ENCODE measurements at regions of chr13 and their contacts with region 1.

Region 1: DNA sequence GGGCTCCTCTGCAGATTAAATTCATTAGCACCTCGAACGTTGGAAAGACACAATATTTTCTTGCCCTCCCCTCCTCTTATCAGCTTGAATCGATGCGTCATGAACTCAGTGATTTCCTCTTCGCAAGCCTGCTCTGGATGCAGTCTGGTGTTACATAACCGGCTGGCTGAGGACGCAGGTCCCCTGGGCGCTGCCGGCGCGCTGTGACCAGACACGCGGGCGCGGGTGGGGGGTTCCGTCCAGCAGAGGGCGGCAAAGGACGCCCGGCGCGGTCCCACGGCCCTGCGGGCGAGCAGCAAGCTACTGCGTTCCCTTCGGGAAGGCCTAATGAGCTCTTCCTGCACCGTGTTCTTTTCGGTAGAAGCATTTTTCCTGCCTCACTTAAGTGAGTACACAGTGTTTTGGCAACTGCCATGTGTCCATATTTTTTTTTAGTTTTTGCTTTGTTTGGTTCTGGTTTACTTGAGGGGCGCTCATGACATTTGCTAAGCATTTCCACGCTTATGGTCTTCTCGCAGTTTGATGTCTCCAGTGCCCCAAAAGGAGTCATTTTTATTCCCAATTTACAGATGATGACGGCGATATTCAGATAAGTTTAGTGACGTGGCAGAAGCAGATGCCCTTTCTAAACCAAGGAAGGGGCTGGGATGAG is 112.2 kb upstream of the MBNL2 start:
- DNase-seq: peak; percentile 80 to 83 (median 80)
- ATAC-seq: peak; percentile 99
- H3K4me3 ChIP-seq: no peak overlapping the region
- H3K27ac ChIP-seq: no peak overlapping the region
- H3K4me1 ChIP-seq: peaks cover 4 to 9% of the 10 kb centered on the region in 2 experiments; a peak in 3 of 5 replicates
- H3K27me3 ChIP-seq: 0 out of 5 replicates have a peak, but pooled peaks cover 0 to 6% of the 10 kb centered on the region in 2 experiments
- CTCF ChIP-seq: peak; percentile 84 to 91 (median 85)
- EP300 ChIP-seq: no peak
- POLR2A ChIP-seq: no peak
- RAD21 ChIP-seq: peak; percentile 95 to 98

Region 2: GRCh38 chr13:95955255-95955654 is 1154.7 kb before region 1 on chr13:
- CTCF ChIA-PET with region 1: no interaction called
- POLR2A ChIA-PET with region 1: no interaction called
- in situ Hi-C with region 1: no loop called
- intact Hi-C with region 1: no loop called
- DNase-seq: no peak
- ATAC-seq: no peak
- H3K4me3 ChIP-seq: no peak overlapping the region
- H3K27ac ChIP-seq: no peak overlapping the region
- H3K4me1 ChIP-seq: peaks cover 0 to 4% of the 10 kb centered on the region in 2 experiments; a peak in 2 of 5 replicates
- H3K27me3 ChIP-seq: no peaks in the 10 kb centered on the region
- CTCF ChIP-seq: no peak
- EP300 ChIP-seq: no peak
- POLR2A ChIP-seq: no peak
- RAD21 ChIP-seq: no peak

Region 3: DNA sequence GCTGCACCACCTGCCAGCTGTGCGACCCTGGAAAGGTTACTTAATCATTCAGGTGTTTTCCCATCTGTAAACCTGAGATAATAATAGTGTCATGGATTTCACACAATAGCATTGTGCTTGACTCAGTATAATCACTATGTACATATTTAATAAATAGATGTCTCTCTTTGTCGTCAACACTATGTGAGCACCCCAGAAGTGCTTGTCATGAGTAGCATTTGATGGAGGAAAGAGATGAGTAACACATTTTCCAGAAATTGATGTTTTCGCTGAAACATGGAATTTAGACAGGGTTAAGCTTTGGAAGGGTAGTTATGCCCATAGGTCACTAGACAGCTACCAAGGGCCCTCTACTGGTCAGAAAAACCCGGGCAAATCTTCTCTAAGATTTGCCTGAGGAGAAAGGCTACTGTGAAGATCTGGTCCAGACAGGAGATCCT is 102.7 kb after region 1 on chr13:
- CTCF ChIA-PET with region 1: interaction called, 5 read pairs
- POLR2A ChIA-PET with region 1: no interaction called
- in situ Hi-C with region 1: loop called (anchors 5 kb)
- intact Hi-C with region 1: loop called (anchors 1 kb)
- DNase-seq: peak in 2 of 4 experiments; percentile 40 to 47
- ATAC-seq: peak; percentile 95
- H3K4me3 ChIP-seq: no peak overlapping the region
- H3K27ac ChIP-seq: no peak overlapping the region
- H3K4me1 ChIP-seq: no peaks in the 10 kb centered on the region; a peak in 1 of 5 replicates
- H3K27me3 ChIP-seq: no peaks in the 10 kb centered on the region
- CTCF ChIP-seq: peak; percentile 56 to 74 (median 61)
- EP300 ChIP-seq: no peak
- POLR2A ChIP-seq: no peak
- RAD21 ChIP-seq: peak; percentile 73 to 82

Region 4: DNA sequence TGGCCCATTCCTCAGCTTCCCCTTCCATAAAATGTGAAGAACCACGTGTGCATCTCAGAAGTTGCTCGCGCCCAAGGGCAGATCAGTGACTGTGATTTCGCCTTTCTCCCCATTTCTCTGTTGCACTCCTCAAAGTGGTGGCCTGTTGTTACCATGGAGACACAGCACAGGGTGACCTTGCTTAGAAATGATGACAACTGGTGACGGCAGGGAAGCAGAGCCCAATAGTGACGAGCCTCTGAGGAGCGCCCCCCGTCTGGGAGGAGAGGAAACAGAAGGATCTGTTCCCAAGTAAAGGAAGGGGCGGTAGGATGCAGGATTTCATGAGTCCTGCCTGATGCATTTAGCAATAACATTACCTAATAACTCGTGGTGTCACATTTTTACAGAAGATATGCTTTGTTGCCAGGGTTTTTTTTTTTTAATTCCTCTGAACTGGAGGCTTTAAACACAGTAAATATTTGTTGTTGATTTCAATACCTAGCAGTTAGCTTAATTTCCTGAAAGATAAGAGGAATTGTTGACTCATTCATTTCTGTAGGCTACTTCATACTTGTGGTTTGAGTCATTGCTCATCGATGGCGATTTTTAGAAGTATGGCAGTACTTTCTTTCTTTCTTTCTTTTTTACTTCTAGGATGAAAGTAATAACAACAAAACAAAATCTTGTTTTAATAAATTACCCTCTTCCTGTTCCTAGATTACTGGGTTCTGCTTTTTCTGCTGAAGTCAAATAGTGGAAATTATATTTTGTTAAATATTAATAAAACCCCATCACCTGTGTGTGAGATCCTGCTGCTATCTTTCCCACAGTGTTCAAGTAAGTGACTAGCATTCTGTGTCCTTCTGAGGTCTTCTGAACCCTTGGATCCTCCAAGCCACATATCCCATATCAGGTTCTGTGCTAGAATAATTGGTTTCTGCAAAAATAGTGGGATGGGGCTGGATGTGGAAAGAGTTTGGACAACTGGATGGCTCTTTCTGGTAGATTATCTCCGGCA is 148.1 kb after region 1 on chr13:
- CTCF ChIA-PET with region 1: no interaction called
- POLR2A ChIA-PET with region 1: interaction called, 3 read pairs
- in situ Hi-C with region 1: no loop called
- intact Hi-C with region 1: loop called (anchors 5 kb)
- DNase-seq: peak; percentile 64 to 81 (median 69)
- ATAC-seq: peak; percentile 70
- H3K4me3 ChIP-seq: no peak overlapping the region
- H3K27ac ChIP-seq: peak overlapping the region; percentile 100
- H3K4me1 ChIP-seq: peaks cover 30 to 76% of the 10 kb centered on the region in 2 experiments
- H3K27me3 ChIP-seq: no peaks in the 10 kb centered on the region
- CTCF ChIP-seq: peak; percentile 28 to 42 (median 32); a peak in 4 of 6 replicates
- EP300 ChIP-seq: peak; percentile 75
- POLR2A ChIP-seq: no peak
- RAD21 ChIP-seq: peak in 1 of 2 experiments; percentile 14; a peak in 1 of 4 replicates

Region 5: DNA sequence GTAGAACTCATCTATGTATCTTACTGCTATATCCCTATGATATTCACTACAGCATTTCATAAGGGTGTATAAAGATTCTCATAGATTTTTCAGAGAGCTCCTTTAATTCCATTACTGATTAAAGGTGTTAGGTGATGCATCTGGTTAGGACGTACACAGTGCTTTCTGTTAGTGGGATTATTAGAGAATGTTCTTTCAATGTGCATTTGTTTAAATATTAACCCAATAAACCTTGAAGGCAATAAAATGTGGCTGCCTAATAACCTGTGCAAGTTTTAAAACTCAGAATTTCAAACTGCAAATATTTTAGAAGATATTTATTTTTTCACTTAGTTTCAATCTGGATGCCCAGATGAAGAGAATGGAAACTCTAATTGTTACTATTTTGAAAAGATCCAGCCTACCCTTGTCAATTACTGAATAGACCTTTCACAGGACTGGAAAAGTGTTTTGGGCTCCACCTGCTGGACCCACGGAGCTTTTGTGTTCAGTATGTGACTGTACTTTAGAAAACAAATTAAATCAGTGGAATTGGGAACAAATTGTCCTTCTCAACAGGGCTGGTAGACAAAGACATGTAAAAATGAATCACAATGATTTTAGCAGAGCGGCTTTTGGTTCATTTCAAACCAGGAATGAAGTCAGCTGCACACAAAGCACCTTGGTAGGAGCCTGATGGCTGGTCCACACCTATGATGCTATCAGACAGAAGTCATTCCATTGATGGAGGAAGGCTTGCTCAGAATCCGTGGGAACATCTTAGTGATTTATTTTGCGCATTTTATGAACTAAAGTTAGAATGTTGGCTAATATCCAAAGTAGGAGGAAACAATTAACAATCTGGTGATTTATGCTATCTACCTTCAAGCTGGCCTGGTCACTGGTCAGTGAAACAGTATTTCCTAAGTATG is 234.6 kb after region 1 on chr13:
- CTCF ChIA-PET with region 1: interaction called, 12 read pairs
- POLR2A ChIA-PET with region 1: no interaction called
- in situ Hi-C with region 1: no loop called
- intact Hi-C with region 1: loop called (anchors 1 kb)
- DNase-seq: peak in 2 of 4 experiments; percentile 22 to 60
- ATAC-seq: peak; percentile 89
- H3K4me3 ChIP-seq: no peak overlapping the region
- H3K27ac ChIP-seq: no peak overlapping the region
- H3K4me1 ChIP-seq: peaks cover 3 to 5% of the 10 kb centered on the region in 2 experiments; a peak in 2 of 5 replicates
- H3K27me3 ChIP-seq: no peaks in the 10 kb centered on the region
- CTCF ChIP-seq: peak; percentile 29 to 60 (median 53); a peak in 5 of 6 replicates
- EP300 ChIP-seq: no peak
- POLR2A ChIP-seq: no peak
- RAD21 ChIP-seq: peak; percentile 41 to 61; a peak in 3 of 4 replicates

Region 6: GRCh38 chr13:97359181-97360057 is 249.5 kb after region 1 on chr13:
- CTCF ChIA-PET with region 1: interaction called, 6 read pairs
- POLR2A ChIA-PET with region 1: interaction called, 3 read pairs
- in situ Hi-C with region 1: loop called (anchors 10 kb)
- intact Hi-C with region 1: loop called (anchors 1 kb)
- DNase-seq: peak; percentile 33 to 71 (median 42)
- ATAC-seq: peak; percentile 95
- H3K4me3 ChIP-seq: no peak overlapping the region
- H3K27ac ChIP-seq: no peak overlapping the region
- H3K4me1 ChIP-seq: no peaks in the 10 kb centered on the region
- H3K27me3 ChIP-seq: no peaks in the 10 kb centered on the region
- CTCF ChIP-seq: peak; percentile 59 to 65 (median 62)
- EP300 ChIP-seq: no peak
- POLR2A ChIP-seq: no peak
- RAD21 ChIP-seq: peak; percentile 63 to 74

Region 7: DNA sequence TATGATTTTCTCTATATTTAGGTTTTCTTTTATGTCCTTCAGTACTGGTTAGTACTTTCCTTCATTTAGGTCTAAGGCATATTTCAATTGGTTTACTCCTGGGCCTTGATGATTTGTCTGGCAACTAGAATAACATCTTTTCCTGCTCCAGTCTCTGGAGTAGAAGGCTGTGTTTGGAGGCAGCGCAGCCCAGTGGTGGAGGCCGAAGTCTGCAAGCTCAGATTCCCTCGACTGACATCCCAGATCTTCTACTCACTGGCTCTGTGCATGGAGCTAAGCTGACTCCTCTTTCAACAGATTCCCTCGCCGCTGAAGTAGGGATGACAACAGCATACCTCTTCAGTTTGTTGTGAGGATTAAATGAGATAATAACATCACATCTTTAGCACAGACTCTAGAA is 465.0 kb after region 1 on chr13:
- CTCF ChIA-PET with region 1: no interaction called
- POLR2A ChIA-PET with region 1: no interaction called
- in situ Hi-C with region 1: no loop called
- intact Hi-C with region 1: loop called (anchors 5 kb)
- DNase-seq: peak in 2 of 4 experiments; percentile 10 to 29
- ATAC-seq: peak; percentile 84
- H3K4me3 ChIP-seq: no peak overlapping the region
- H3K27ac ChIP-seq: no peak overlapping the region
- H3K4me1 ChIP-seq: no peaks in the 10 kb centered on the region
- H3K27me3 ChIP-seq: no peaks in the 10 kb centered on the region; a peak in 1 of 5 replicates
- CTCF ChIP-seq: peak; percentile 45 to 53 (median 48); a peak in 5 of 6 replicates
- EP300 ChIP-seq: no peak
- POLR2A ChIP-seq: no peak
- RAD21 ChIP-seq: peak; percentile 47 to 70

Measured in K562 (cell line).